H1 (cell line): ENCODE measurements at regions of chr1 and their contacts with region 1.

Region 1: GRCh38 chr1:62209931-62210595 is 15.4 kb downstream of the L1TD1 start:
- DNase-seq: no peak
- H3K4me3 ChIP-seq: no peak overlapping the region
- H3K27ac ChIP-seq: no peak overlapping the region
- H3K4me1 ChIP-seq: no peaks in the 10 kb centered on the region; a peak in 1 of 7 replicates
- H3K27me3 ChIP-seq: no peaks in the 10 kb centered on the region
- CTCF ChIP-seq: no peak
- EP300 ChIP-seq: no peak
- POLR2A ChIP-seq: peak; percentile 21 to 38
- RAD21 ChIP-seq: no peak

Region 2: DNA sequence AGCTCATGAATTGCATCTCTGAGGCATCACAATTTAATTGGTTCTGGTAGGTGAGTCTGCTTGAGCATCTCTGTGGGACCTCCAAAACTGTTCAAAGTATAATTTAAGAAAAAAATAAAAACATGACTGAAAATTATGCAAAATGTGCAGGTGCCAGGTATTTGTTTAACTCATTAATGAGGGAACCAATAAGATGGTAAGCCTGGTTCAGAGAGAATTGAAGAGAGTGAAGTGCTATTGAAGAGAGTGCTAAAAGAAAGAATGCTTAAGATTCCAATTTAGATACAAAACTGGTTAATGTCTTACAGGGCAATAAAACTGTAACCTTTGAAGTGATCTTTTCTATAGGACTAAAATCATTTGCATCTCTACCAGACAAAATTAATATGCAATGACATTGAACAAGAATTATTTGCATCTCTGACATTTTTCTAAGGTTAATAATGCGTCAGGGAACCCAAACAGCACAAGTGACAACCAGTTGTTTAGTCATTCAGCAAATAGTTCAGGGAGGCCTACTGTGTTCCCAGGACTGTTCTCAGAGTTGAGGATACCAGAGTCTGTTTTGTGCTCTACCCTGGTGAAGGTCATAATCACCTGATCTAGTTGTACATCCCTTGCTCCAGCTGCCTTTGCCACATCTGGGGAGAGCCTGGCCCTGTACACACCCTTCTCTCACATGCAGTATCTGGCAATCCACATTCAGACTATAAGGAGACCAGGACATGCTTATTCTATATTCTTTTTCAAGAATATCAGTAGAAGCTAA is 284.3 kb before region 1 on chr1:
- CTCF ChIA-PET with region 1: no interaction called
- POLR2A ChIA-PET with region 1: no interaction called
- DNase-seq: no peak
- H3K4me3 ChIP-seq: no peak overlapping the region
- H3K27ac ChIP-seq: no peak overlapping the region
- H3K4me1 ChIP-seq: no peaks in the 10 kb centered on the region; a peak in 1 of 7 replicates
- H3K27me3 ChIP-seq: no peaks in the 10 kb centered on the region
- CTCF ChIP-seq: no peak
- EP300 ChIP-seq: no peak
- POLR2A ChIP-seq: no peak
- RAD21 ChIP-seq: no peak

Region 3: GRCh38 chr1:62068416-62068843 is 141.6 kb before region 1 on chr1:
- CTCF ChIA-PET with region 1: no interaction called
- POLR2A ChIA-PET with region 1: no interaction called
- DNase-seq: no peak
- H3K4me3 ChIP-seq: no peak overlapping the region
- H3K27ac ChIP-seq: no peak overlapping the region
- H3K4me1 ChIP-seq: 0 out of 7 replicates have a peak, but pooled peaks cover 0 to 2% (median 0%) of the 10 kb centered on the region in 4 experiments
- H3K27me3 ChIP-seq: no peaks in the 10 kb centered on the region
- CTCF ChIP-seq: no peak
- EP300 ChIP-seq: no peak
- POLR2A ChIP-seq: no peak
- RAD21 ChIP-seq: no peak

Region 4: GRCh38 chr1:62111084-62111483 is 99.0 kb before region 1 on chr1:
- CTCF ChIA-PET with region 1: no interaction called
- POLR2A ChIA-PET with region 1: no interaction called
- DNase-seq: no peak
- H3K4me3 ChIP-seq: no peak overlapping the region
- H3K27ac ChIP-seq: no peak overlapping the region
- H3K4me1 ChIP-seq: no peaks in the 10 kb centered on the region
- H3K27me3 ChIP-seq: no peaks in the 10 kb centered on the region
- CTCF ChIP-seq: no peak
- EP300 ChIP-seq: no peak
- POLR2A ChIP-seq: no peak
- RAD21 ChIP-seq: peak; percentile 25 to 31; a peak in 2 of 4 replicates

Region 5: GRCh38 chr1:62295921-62296491 is 85.9 kb after region 1 on chr1:
- CTCF ChIA-PET with region 1: no interaction called
- POLR2A ChIA-PET with region 1: no interaction called
- DNase-seq: no peak
- H3K4me3 ChIP-seq: no peak overlapping the region
- H3K27ac ChIP-seq: no peak overlapping the region
- H3K4me1 ChIP-seq: peaks cover 4 to 12% (median 8%) of the 10 kb centered on the region in 4 experiments; a peak in 5 of 7 replicates
- H3K27me3 ChIP-seq: no peaks in the 10 kb centered on the region; a peak in 2 of 7 replicates
- CTCF ChIP-seq: no peak
- EP300 ChIP-seq: no peak
- POLR2A ChIP-seq: no peak
- RAD21 ChIP-seq: no peak

Region 6: GRCh38 chr1:62318756-62319544 is 108.9 kb after region 1 on chr1 and contains the start of gene KANK4:
- CTCF ChIA-PET with region 1: no interaction called
- POLR2A ChIA-PET with region 1: interaction called, 12 read pairs
- DNase-seq: peak in 1 of 2 experiments; percentile 78
- H3K4me3 ChIP-seq: peak within 1 kb of the TSS; percentile 47 to 78 (median 66)
- H3K27ac ChIP-seq: no peak within 1 kb of the TSS
- H3K4me1 ChIP-seq: no peaks in the 10 kb centered on the region; a peak in 1 of 7 replicates
- H3K27me3 ChIP-seq: peaks cover 24 to 45% (median 38%) of the 10 kb centered on the region in 4 experiments
- CTCF ChIP-seq: peak in 1 of 3 experiments; percentile 6; a peak in 1 of 4 replicates
- EP300 ChIP-seq: no peak
- POLR2A ChIP-seq: no peak
- RAD21 ChIP-seq: no peak
- total RNA-seq, gene KANK4: 0.22 and 0.23 TPM in 2 replicates